ENCODE measurements at regions of chr6 and their contacts with region 1.

Region 1: DNA sequence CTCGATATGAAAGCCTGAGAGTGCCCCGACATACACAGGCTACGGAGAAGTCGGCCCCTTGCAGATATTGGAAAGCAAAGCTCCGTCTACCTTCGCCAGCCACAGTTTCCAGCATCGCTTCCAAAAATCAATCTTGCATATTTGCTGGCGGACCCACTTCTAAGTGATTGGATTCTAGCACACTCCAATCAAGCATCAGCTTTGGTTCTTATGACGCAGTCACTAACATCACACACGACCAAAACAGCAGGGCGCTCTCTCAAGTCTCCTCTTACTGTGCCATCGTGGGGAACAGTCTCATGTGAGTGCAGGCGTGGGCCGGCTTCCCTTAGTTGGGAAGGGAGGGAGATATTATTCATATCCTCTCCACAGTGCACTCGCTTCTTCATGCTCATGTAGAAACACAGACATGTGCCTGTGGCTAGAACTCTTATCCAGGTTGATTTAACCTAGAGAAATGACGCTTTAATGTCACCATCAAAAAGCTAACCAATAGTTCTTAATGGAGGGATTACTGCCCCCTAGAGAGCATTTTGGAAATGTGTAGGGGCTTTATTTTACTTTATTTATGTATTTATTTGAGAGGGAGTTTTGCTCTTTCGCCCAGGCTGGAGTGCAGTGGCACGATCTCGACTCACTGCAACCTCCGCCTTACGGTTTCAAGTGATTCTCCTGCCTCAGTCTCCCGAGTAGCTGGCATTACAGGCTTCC is 229.8 kb downstream of the SOD2 start:
- DNase-seq: no peak
- ATAC-seq: no peak
- H3K4me3 ChIP-seq: no peak overlapping the region
- H3K27ac ChIP-seq: no peak overlapping the region
- H3K4me1 ChIP-seq: no peaks in the 10 kb centered on the region
- H3K27me3 ChIP-seq: no peaks in the 10 kb centered on the region

Region 2: GRCh38 chr6:159217595-159218275 is 245.5 kb before region 1 on chr6:
- intact Hi-C with region 1: loop called in 1 of 2 experiments (anchors 5 kb)
- DNase-seq: no peak
- ATAC-seq: no peak
- H3K4me3 ChIP-seq: no peak overlapping the region
- H3K27ac ChIP-seq: no peak overlapping the region
- H3K4me1 ChIP-seq: peaks cover 0 to 3% of the 10 kb centered on the region in 2 donors
- H3K27me3 ChIP-seq: no peaks in the 10 kb centered on the region

Region 3: GRCh38 chr6:159233365-159234101 is 229.7 kb before region 1 on chr6:
- intact Hi-C with region 1: no loop called
- DNase-seq: peak in 1 of 2 donors; percentile 67
- ATAC-seq: peak; percentile 46
- H3K4me3 ChIP-seq: no peak overlapping the region
- H3K27ac ChIP-seq: no peak overlapping the region
- H3K4me1 ChIP-seq: no peaks in the 10 kb centered on the region
- H3K27me3 ChIP-seq: no peaks in the 10 kb centered on the region

Region 4: DNA sequence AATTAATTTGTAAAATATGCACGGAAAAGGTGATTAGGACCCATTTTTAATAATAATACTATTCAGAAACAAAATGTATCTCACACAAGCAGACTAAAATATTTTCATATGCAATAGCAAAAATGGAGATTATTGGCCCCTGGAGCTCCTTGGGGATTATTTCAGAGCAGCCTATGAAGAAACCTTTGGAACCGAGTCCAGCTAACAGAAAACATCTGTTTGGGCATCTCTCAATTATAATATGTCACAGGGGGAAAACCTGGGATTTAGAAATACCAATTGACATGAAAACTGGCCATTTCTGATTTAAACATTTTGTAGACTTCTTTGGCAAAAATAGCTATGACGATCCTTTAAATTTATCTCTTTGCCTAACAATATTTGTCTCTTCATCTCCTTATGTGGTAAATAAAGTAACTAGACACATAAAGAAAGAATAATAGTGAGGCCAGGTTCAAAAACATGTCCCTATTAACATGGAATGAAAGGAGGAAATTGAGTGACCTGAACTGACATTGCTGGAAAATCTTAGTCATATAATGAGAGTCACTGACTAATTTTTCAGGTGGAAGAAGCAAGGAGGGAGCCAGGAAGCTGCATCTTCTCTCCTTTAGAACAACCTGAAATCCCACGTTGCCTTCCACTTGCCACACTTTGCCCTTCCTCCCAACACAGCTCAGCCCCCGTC is 30.8 kb after region 1 on chr6:
- intact Hi-C with region 1: no loop called
- DNase-seq: no peak
- ATAC-seq: no peak
- H3K4me3 ChIP-seq: no peak overlapping the region
- H3K27ac ChIP-seq: no peak overlapping the region
- H3K4me1 ChIP-seq: no peaks in the 10 kb centered on the region
- H3K27me3 ChIP-seq: no peaks in the 10 kb centered on the region

Region 5: GRCh38 chr6:159654483-159655098 is 191.3 kb after region 1 on chr6:
- intact Hi-C with region 1: loop called in 1 of 2 experiments (anchors 10 kb)
- DNase-seq: no peak
- ATAC-seq: peak; percentile 54
- H3K4me3 ChIP-seq: no peak overlapping the region
- H3K27ac ChIP-seq: no peak overlapping the region
- H3K4me1 ChIP-seq: no peaks in the 10 kb centered on the region
- H3K27me3 ChIP-seq: no peaks in the 10 kb centered on the region